Right ventricle myocardium inferior (tissue), 1 donor: ENCODE measurements at regions of chr19 and their contacts with region 1.

Region 1: GRCh38 chr19:44093931-44094765 is at the start of gene ZNF224:
- DNase-seq: peak; percentile 93
- ATAC-seq: peak; percentile 98
- total RNA-seq, gene ZNF224: 10.2 TPM

Region 2: GRCh38 chr19:44071824-44072542 is 22.2 kb before region 1 on chr19 and contains the start of gene ZNF284:
- intact Hi-C with region 1: loop called (anchors 2 kb)
- DNase-seq: peak; percentile 84
- ATAC-seq: peak; percentile 99
- total RNA-seq, gene ZNF284: 1.7 TPM